ENCODE measurements at regions of chr7 and their contacts with region 1.

Region 1: GRCh38 chr7:27662490-27663205 is at the start of gene HIBADH:
- DNase-seq: peak; percentile 95 to 99 (median 96)
- ATAC-seq: peak; percentile 96
- H3K4me3 ChIP-seq: peak within 1 kb of the TSS; percentile 84
- H3K27ac ChIP-seq: peak within 1 kb of the TSS; percentile 76
- H3K4me1 ChIP-seq: peaks cover 3 to 20% of the 10 kb centered on the region in 2 experiments; a peak in 4 of 5 replicates
- H3K27me3 ChIP-seq: no peaks in the 10 kb centered on the region
- CTCF ChIP-seq: peak in 1 of 3 experiments; percentile 17; a peak in 1 of 6 replicates
- EP300 ChIP-seq: peak; percentile 40; the same call in 1 of the 2 replicates
- POLR2A ChIP-seq: peak; percentile 82
- RAD21 ChIP-seq: no peak
- polyA plus RNA-seq, gene HIBADH: 10.7 to 13.9 TPM

Region 2: GRCh38 chr7:27210441-27211083 is 452.1 kb before region 1 on chr7:
- CTCF ChIA-PET with region 1: no interaction called
- POLR2A ChIA-PET with region 1: no interaction called
- in situ Hi-C with region 1: no loop called
- intact Hi-C with region 1: loop called (anchors 2 kb)
- DNase-seq: peak; percentile 48 to 68 (median 64)
- ATAC-seq: peak; percentile 91
- H3K4me3 ChIP-seq: no peak overlapping the region
- H3K27ac ChIP-seq: no peak overlapping the region
- H3K4me1 ChIP-seq: peaks cover 0 to 15% of the 10 kb centered on the region in 2 experiments; a peak in 1 of 5 replicates
- H3K27me3 ChIP-seq: peaks cover 44 to 70% of the 10 kb centered on the region in 2 experiments
- CTCF ChIP-seq: peak; percentile 63 to 73 (median 63)
- EP300 ChIP-seq: no peak
- POLR2A ChIP-seq: no peak
- RAD21 ChIP-seq: peak; percentile 29 to 59; a peak in 3 of 4 replicates

Region 3: DNA sequence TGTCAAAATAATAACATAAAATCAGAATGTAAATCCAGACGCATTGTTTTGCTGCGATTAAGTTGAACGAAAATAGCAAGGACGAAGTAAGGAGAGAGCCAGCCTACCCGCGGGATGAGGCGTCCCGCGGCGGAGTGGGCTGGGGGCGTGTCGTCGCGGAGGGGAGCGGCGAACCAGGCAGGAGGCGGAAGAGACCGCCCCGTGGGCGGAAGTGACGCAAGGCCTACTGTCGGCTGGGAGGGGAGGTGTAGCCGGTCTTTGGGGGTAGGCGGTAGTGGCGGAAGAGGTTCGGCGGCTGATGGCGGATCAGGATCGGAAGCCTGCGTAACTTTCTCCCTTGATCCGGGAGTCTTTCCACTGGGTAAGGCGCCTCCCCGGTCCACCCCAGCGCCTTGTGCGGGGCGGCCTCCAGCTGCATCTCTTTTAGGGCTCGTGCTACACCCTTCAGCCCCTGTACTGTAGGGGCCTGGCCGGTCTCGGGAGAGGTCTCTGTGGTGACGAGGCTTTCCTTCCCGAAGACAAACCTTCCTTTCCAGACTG is 77.3 kb after region 1 on chr7 and contains the start of gene TAX1BP1:
- CTCF ChIA-PET with region 1: no interaction called
- POLR2A ChIA-PET with region 1: interaction called, 4 read pairs
- in situ Hi-C with region 1: no loop called
- intact Hi-C with region 1: loop called (anchors 1 kb)
- DNase-seq: peak; percentile 95 to 97 (median 95)
- ATAC-seq: peak; percentile 89
- H3K4me3 ChIP-seq: peak within 1 kb of the TSS; percentile 91
- H3K27ac ChIP-seq: peak within 1 kb of the TSS; percentile 93
- H3K4me1 ChIP-seq: peaks cover 6 to 11% of the 10 kb centered on the region in 2 experiments
- H3K27me3 ChIP-seq: no peaks in the 10 kb centered on the region
- CTCF ChIP-seq: no peak
- EP300 ChIP-seq: no peak
- POLR2A ChIP-seq: peak; percentile 91
- RAD21 ChIP-seq: no peak
- polyA plus RNA-seq, gene TAX1BP1: 109 TPM

Region 4: DNA sequence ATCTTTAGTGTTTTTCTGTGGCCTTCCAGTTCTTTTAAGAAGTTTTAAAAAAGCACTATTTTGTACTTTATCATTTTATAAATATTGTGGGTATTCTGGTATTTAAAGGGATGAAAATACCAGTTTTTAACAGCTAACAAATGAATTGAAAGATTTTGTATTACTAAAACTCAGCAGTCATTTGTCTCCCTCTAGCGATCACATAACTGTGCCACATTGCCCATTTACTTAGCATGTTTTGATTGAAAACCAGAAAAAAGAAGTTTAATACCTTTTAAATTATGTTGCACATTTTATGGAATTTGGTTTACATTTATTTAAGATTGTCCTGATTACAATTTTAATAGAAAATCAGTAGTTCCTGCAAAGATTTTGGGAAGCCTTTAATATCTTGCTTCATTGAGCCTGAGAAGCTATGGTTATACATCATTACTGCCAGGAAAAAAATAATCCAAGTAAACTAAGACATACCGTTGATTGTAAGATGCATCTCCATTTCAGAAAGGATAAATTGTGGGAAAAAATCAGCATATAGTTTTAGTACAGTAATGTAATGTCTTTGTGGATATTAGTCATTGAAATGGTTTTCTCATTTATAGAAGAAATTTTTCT is 112.2 kb after region 1 on chr7:
- CTCF ChIA-PET with region 1: interaction called, 3 read pairs
- POLR2A ChIA-PET with region 1: interaction called, 5 read pairs
- in situ Hi-C with region 1: no loop called
- intact Hi-C with region 1: loop called (anchors 2 kb)
- DNase-seq: peak in 3 of 4 experiments; percentile 15 to 54 (median 18)
- ATAC-seq: peak; percentile 69
- H3K4me3 ChIP-seq: no peak overlapping the region
- H3K27ac ChIP-seq: no peak overlapping the region
- H3K4me1 ChIP-seq: peaks cover 0 to 5% of the 10 kb centered on the region in 2 experiments; a peak in 2 of 5 replicates
- H3K27me3 ChIP-seq: no peaks in the 10 kb centered on the region
- CTCF ChIP-seq: peak; percentile 42 to 84 (median 57); a peak in 5 of 6 replicates
- EP300 ChIP-seq: no peak
- POLR2A ChIP-seq: no peak
- RAD21 ChIP-seq: peak; percentile 79 to 80